CD8-positive, alpha-beta memory T cell (primary cell): ENCODE measurements at regions of chr17 and their contacts with region 1.

Region 1: DNA sequence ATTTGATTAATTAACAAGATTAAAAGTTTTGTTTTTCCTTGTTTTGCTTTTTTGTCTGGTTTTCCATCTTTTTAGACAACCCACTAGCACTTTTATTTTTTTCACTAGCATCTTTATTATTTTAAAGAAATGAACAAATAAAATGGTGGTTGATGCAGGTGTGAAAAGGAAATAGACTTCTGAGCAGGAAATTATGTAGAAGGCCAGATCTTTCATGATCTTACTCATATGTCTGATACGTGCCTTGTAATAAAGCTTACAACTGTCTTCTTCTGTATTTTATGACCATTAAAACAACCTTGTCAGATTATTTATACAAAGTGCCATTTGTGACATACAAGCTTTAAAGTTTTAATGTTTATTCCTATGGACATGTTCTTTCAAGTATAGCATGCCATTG is 6.3 kb downstream of the SLFN12L start:
- DNase-seq: no peak
- H3K4me3 ChIP-seq: no peak overlapping the region
- H3K4me3 Mint-ChIP-seq: peak overlapping the region; percentile 78 to 87 (median 84)
- H3K27ac ChIP-seq: peak overlapping the region; percentile 55
- H3K27ac Mint-ChIP-seq: peak overlapping the region; percentile 86 to 100 (median 94)
- H3K4me1 ChIP-seq: peaks cover 50% of the 10 kb centered on the region
- H3K4me1 Mint-ChIP-seq: peaks cover 57 to 81% (median 73%) of the 10 kb centered on the region in 3 donors
- H3K27me3 ChIP-seq: no peaks in the 10 kb centered on the region
- H3K27me3 Mint-ChIP-seq: no peaks in the 10 kb centered on the region

Region 2: DNA sequence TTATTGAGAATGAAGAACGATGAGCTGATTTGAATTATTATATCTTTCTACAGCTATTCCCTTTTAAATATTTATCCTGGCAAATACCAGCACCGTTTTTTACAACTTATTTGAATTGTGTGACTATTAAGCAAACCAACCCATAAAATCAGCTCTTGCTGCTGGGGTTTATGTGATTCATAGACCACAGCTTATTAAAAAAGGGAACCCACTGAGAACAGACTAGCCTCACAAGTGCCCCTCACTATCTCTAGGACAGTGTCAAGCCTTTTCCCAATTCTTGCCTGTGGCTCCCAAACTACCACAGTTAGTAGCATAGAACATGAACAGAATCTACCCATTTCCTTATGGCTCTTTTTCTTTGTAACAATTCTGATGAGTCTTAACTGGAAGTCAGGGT is 557.0 kb before region 1 on chr17:
- CTCF ChIA-PET with region 1: no interaction called
- POLR2A ChIA-PET with region 1: interaction called, 10 read pairs
- DNase-seq: no peak
- H3K4me3 ChIP-seq: no peak overlapping the region
- H3K4me3 Mint-ChIP-seq: no peak overlapping the region
- H3K27ac ChIP-seq: no peak overlapping the region
- H3K27ac Mint-ChIP-seq: no peak overlapping the region
- H3K4me1 ChIP-seq: no peaks in the 10 kb centered on the region
- H3K4me1 Mint-ChIP-seq: peaks cover 2 to 3% (median 2%) of the 10 kb centered on the region in 3 donors
- H3K27me3 ChIP-seq: no peaks in the 10 kb centered on the region
- H3K27me3 Mint-ChIP-seq: no peaks in the 10 kb centered on the region

Region 3: GRCh38 chr17:35170968-35171771 is 360.0 kb before region 1 on chr17:
- CTCF ChIA-PET with region 1: interaction called, 21 read pairs
- POLR2A ChIA-PET with region 1: no interaction called
- DNase-seq: peak in 3 of 5 donors; percentile 63 to 70 (median 65)
- H3K4me3 ChIP-seq: no peak overlapping the region
- H3K4me3 Mint-ChIP-seq: peak overlapping the region; percentile 22 to 77 (median 74)
- H3K27ac ChIP-seq: no peak overlapping the region
- H3K27ac Mint-ChIP-seq: peak overlapping the region; percentile 63 to 96 (median 88)
- H3K4me1 ChIP-seq: peaks cover 39% of the 10 kb centered on the region
- H3K4me1 Mint-ChIP-seq: peaks cover 41 to 51% (median 47%) of the 10 kb centered on the region in 3 donors
- H3K27me3 ChIP-seq: no peaks in the 10 kb centered on the region
- H3K27me3 Mint-ChIP-seq: no peaks in the 10 kb centered on the region

Region 4: DNA sequence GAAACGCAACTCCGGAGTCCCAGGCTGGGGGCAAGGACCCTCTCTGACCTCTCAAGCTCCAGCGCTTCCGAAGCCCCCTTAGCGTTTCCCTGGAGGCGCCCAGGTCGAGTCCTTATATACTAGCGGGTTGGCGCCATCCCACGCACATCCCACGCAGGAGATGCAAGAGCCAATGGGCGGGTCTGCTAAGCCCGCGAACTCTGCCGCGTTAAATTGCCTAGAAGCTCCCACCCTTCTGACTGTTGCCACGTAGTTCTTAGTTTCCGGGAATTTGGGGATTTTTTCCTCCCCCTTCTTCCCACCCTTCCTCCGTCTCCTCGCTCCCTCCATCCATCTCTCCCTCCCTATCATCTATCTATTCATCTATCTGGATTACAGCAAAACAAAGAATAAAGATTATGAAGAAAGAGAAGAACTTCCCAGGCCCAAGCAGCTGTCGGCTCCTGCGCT is 157.6 kb before region 1 on chr17 and contains the start of gene SLFN11:
- CTCF ChIA-PET with region 1: interaction called, 4 read pairs
- POLR2A ChIA-PET with region 1: interaction called, 13 read pairs
- DNase-seq: peak; percentile 82 to 92 (median 85)
- H3K4me3 ChIP-seq: peak within 1 kb of the TSS; percentile 97
- H3K4me3 Mint-ChIP-seq: peak within 1 kb of the TSS; percentile 96 to 100 (median 99)
- H3K27ac ChIP-seq: peak within 1 kb of the TSS; percentile 87
- H3K27ac Mint-ChIP-seq: peak within 1 kb of the TSS; percentile 98 to 100 (median 100)
- H3K4me1 ChIP-seq: peaks cover 8% of the 10 kb centered on the region
- H3K4me1 Mint-ChIP-seq: peaks cover 56 to 65% (median 59%) of the 10 kb centered on the region in 3 donors
- H3K27me3 ChIP-seq: no peaks in the 10 kb centered on the region
- H3K27me3 Mint-ChIP-seq: peaks cover 0 to 1% of the 10 kb centered on the region in 2 donors
- total RNA-seq, gene SLFN11: 39.5 to 48.4 TPM

Region 5: DNA sequence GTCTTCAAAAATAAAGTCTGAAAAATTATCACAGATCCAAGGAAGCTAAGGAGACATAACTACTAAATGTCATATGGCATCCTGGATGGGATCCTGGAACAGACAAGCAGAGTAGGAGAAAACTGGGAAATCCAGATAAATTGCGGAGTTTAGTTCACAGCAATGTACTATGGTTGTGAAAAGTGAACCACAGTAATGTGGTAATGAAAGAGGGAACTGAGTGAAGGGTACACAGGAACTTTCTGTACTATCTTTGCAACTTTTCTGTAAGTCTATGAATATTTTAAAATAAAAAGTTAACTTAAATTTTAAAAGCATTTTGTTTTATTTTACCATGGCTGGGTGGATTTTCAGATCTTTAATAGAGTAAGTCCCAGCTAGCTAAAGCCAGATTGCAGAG is 10.0 kb before region 1 on chr17:
- CTCF ChIA-PET with region 1: interaction called, 9 read pairs
- POLR2A ChIA-PET with region 1: interaction called, 11 read pairs
- DNase-seq: no peak
- H3K4me3 ChIP-seq: peak overlapping the region; percentile 34
- H3K4me3 Mint-ChIP-seq: peak overlapping the region; percentile 63 to 92 (median 84)
- H3K27ac ChIP-seq: no peak overlapping the region
- H3K27ac Mint-ChIP-seq: peak overlapping the region; percentile 86 to 98 (median 95)
- H3K4me1 ChIP-seq: peaks cover 64% of the 10 kb centered on the region
- H3K4me1 Mint-ChIP-seq: peaks cover 96 to 100% (median 98%) of the 10 kb centered on the region in 3 donors
- H3K27me3 ChIP-seq: no peaks in the 10 kb centered on the region
- H3K27me3 Mint-ChIP-seq: no peaks in the 10 kb centered on the region

Region 6: GRCh38 chr17:35596072-35596471 is 64.9 kb after region 1 on chr17:
- CTCF ChIA-PET with region 1: no interaction called
- POLR2A ChIA-PET with region 1: no interaction called
- DNase-seq: no peak
- H3K4me3 ChIP-seq: no peak overlapping the region
- H3K4me3 Mint-ChIP-seq: no peak overlapping the region
- H3K27ac ChIP-seq: no peak overlapping the region
- H3K27ac Mint-ChIP-seq: peak overlapping the region in 2 of 8 donors; percentile 24 to 57
- H3K4me1 ChIP-seq: no peaks in the 10 kb centered on the region
- H3K4me1 Mint-ChIP-seq: peaks cover 7 to 46% (median 30%) of the 10 kb centered on the region in 3 donors
- H3K27me3 ChIP-seq: no peaks in the 10 kb centered on the region
- H3K27me3 Mint-ChIP-seq: no peaks in the 10 kb centered on the region